ENCODE measurements at regions of chr6 and their contacts with region 1.

Region 1: DNA sequence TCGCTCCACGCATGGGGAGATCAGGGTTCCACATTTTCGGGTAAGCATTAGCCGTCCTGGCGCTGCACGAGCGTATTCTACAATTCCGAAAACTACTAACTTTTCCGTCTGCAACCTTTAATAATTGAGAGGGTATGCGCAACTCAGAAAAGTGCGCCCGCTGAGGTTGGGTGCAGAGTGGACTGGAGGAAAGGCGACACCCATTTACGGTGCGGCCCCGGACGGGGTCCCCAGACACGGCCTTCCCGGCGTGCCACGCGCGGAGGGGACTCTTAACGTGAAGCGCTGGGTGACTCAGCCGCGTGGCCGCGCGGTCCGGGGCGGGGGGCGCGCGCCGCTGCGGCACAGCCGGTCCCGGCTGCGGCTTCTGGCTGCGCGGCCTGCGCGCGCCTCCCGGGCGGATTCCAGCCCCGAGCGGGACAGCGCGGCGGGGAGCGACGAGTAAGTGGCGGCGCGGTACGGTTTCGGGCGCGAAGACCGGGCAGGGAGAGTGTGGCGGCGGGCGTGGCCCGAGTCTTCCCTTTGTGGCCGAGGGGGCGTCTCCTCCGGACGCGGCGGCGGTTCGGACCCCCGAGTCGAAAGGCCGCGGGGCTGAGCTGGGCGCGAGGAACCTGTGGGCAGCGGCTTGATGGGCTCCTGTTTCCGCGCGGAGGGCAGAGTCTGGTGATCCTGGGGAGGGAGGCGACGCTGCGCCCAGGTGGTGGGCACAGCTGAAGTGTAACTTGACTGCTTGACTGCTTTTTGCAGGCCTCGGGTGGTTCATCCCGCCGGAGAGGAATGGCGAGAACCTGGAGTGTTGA is at the starts of genes KCTD20 and PXT1:
- DNase-seq: peak; percentile 90 to 95 (median 93)
- ATAC-seq: peak; percentile 87 to 94 (median 91)
- H3K4me3 ChIP-seq: peak within 1 kb of the TSS; percentile 78 to 99 (median 89)
- H3K27ac ChIP-seq: peak within 1 kb of the TSS; percentile 85 to 100 (median 98)
- H3K4me1 ChIP-seq: peaks cover 8 to 48% (median 34%) of the 10 kb centered on the region in 12 donors
- H3K27me3 ChIP-seq: no peaks in the 10 kb centered on the region
- CTCF ChIP-seq: no peak
- POLR2A ChIP-seq: peak in 1 of 2 donors; percentile 70
- total RNA-seq, gene KCTD20: 25.0 to 43.9 (median 29.0) TPM
- total RNA-seq, gene PXT1: 0.21 to 0.59 (median 0.40) TPM in 4 of 9 donors, not detected in the others

Region 2: DNA sequence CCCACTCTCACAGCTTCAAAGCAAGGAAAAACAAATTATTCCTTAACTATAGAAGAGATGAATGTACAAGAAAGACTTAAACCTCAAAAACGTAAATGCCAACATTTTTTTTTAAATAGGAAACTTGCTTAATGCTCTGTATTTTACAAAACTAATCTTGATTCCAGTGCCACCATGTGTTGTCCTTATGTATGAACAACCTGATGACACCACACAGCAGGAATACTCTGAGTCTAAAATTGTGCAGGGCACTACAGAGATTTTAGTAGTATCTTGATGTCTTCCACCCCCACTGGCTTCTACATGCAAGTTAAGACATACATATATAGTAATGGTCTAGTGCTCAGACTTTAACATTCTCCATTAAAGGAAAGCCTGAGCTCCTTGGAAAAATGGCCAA is 568.1 kb before region 1 on chr6:
- intact Hi-C with region 1: no loop called
- DNase-seq: no peak
- ATAC-seq: no peak
- H3K4me3 ChIP-seq: no peak overlapping the region
- H3K27ac ChIP-seq: no peak overlapping the region
- H3K4me1 ChIP-seq: peaks cover 0 to 8% (median 0%) of the 10 kb centered on the region in 12 donors
- H3K27me3 ChIP-seq: no peaks in the 10 kb centered on the region
- CTCF ChIP-seq: no peak
- POLR2A ChIP-seq: no peak

Region 3: DNA sequence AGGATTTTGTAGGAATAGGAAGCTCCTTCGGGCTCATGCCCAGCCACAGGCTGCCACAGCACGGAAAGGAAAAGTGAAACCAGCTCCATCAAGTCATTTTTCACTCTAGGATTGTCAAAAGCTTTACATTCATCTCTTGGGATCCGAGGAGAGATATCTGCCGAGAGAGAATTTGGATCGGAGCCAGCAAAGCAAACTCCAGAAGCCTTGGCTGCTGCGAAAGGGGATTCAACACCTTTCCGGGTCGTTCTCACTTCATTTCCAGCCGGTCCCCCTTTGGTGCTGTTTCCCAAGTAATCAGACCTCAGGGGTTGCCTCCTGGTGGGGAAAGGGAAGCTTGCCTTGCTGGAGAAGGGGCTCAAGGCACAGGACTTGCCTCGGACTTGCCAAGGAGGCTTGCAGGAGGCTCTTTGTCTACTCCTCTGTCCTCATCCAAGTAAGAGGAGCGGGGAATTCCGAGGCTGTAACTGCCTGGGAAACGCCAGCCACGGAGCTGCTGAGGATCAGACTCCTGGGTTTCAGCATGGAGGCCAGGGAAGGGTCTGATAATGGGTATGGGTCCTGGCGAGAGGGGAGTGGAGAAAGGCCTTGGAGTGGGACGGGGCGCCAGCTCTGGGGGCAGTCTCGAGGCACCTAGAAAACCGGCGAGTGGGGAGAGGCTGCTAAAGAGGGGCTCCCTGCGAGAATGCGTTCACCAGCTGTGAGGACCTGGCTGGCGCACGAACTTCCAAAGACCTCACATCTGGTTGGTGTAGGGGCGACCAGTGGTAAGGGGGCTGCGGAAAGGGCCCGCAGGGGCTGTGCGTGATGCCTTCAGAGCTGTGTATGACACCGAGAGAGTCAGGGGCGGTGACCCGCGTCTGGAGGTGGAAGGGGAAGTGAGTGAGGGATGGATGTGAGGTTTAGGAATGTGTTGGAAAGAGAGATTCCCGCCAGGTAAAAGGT is 56.1 kb before region 1 on chr6:
- intact Hi-C with region 1: no loop called
- DNase-seq: peak in 1 of 5 donors; percentile 16
- ATAC-seq: peak; percentile 19 to 68 (median 56)
- H3K4me3 ChIP-seq: peak overlapping the region; percentile 50 to 79 (median 60)
- H3K27ac ChIP-seq: peak overlapping the region in 5 of 12 donors; percentile 10 to 81 (median 43)
- H3K4me1 ChIP-seq: peaks cover 0 to 36% (median 12%) of the 10 kb centered on the region in 12 donors
- H3K27me3 ChIP-seq: peaks cover 0 to 9% (median 0%) of the 10 kb centered on the region in 9 donors
- CTCF ChIP-seq: peak in 1 of 12 donors; percentile 12
- POLR2A ChIP-seq: no peak

Region 4: GRCh38 chr6:36493859-36494258 is 51.0 kb after region 1 on chr6:
- intact Hi-C with region 1: no loop called
- DNase-seq: no peak
- ATAC-seq: peak in 1 of 4 donors; percentile 61
- H3K4me3 ChIP-seq: no peak overlapping the region
- H3K27ac ChIP-seq: peak overlapping the region in 1 of 12 donors; percentile 33
- H3K4me1 ChIP-seq: peaks cover 0 to 25% (median 2%) of the 10 kb centered on the region in 12 donors
- H3K27me3 ChIP-seq: no peaks in the 10 kb centered on the region
- CTCF ChIP-seq: no peak
- POLR2A ChIP-seq: no peak

Region 5: GRCh38 chr6:36576561-36576960 is 133.7 kb after region 1 on chr6:
- intact Hi-C with region 1: no loop called
- DNase-seq: no peak
- ATAC-seq: no peak
- H3K4me3 ChIP-seq: no peak overlapping the region
- H3K27ac ChIP-seq: no peak overlapping the region
- H3K4me1 ChIP-seq: peaks cover 0 to 20% (median 6%) of the 10 kb centered on the region in 12 donors
- H3K27me3 ChIP-seq: no peaks in the 10 kb centered on the region
- CTCF ChIP-seq: no peak
- POLR2A ChIP-seq: no peak

Region 6: GRCh38 chr6:36594029-36594815 is 151.4 kb after region 1 on chr6 and contains the start of gene SRSF3:
- intact Hi-C with region 1: loop called in 7 of 10 experiments (anchors 1 to 10 kb)
- DNase-seq: peak; percentile 97 to 98 (median 98)
- ATAC-seq: peak; percentile 96 to 99 (median 97)
- H3K4me3 ChIP-seq: peak within 1 kb of the TSS; percentile 64 to 83 (median 74)
- H3K27ac ChIP-seq: peak within 1 kb of the TSS; percentile 87 to 100 (median 97)
- H3K4me1 ChIP-seq: peaks cover 4 to 41% (median 30%) of the 10 kb centered on the region in 12 donors
- H3K27me3 ChIP-seq: no peaks in the 10 kb centered on the region
- CTCF ChIP-seq: peak; percentile 43 to 85 (median 55)
- POLR2A ChIP-seq: peak in 1 of 2 donors; percentile 95
- total RNA-seq, gene SRSF3: 43.2 to 162 (median 111) TPM